ENCODE measurements at regions of chr7 and their contacts with region 1.

Region 1: DNA sequence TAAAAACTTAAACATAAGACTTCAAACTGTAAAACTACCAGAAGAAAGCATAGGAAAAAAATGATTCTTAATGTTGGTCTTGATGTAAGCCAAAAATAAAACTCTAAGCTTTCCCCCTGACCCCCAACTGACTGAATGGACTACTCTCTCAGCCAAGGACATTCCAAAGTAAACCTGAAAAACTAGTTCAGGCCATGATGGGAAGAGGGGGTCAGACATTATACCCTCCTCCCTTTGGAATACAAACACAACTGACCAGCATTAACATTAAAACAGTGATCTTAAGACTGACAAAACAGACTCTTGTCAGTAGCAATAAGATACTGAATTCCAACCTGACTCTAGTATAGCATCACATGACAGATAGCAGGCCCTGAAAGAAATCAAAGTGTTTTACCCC is 13.5 kb upstream of the LRGUK start:
- DNase-seq: no peak
- H3K4me3 ChIP-seq: no peak overlapping the region
- H3K27ac ChIP-seq: no peak overlapping the region
- H3K4me1 ChIP-seq: no peaks in the 10 kb centered on the region
- H3K27me3 ChIP-seq: no peaks in the 10 kb centered on the region
- CTCF ChIP-seq: no peak
- POLR2A ChIP-seq: no peak

Region 2: DNA sequence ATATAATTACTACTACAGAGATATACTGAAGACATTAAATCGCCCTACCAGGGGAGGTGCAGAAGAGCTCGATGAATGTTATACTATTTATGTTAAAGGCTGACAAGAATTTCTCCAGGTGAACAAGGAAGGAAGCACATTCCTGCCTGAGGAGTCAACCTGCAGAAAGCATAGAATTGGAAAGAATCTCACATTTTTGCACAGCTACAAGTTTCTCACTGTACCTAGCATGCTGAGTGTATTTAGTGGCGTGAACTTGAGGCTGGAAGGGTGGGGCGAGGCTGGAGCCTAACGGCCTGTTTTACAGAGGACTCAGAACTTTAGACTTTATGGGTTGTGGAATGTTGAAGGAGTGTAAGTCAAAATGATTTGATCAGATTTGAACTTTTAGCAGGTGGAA is 360.1 kb before region 1 on chr7:
- intact Hi-C with region 1: no loop called
- DNase-seq: no peak
- H3K4me3 ChIP-seq: no peak overlapping the region
- H3K27ac ChIP-seq: no peak overlapping the region
- H3K4me1 ChIP-seq: no peaks in the 10 kb centered on the region
- H3K27me3 ChIP-seq: no peaks in the 10 kb centered on the region
- CTCF ChIP-seq: no peak
- POLR2A ChIP-seq: no peak

Region 3: DNA sequence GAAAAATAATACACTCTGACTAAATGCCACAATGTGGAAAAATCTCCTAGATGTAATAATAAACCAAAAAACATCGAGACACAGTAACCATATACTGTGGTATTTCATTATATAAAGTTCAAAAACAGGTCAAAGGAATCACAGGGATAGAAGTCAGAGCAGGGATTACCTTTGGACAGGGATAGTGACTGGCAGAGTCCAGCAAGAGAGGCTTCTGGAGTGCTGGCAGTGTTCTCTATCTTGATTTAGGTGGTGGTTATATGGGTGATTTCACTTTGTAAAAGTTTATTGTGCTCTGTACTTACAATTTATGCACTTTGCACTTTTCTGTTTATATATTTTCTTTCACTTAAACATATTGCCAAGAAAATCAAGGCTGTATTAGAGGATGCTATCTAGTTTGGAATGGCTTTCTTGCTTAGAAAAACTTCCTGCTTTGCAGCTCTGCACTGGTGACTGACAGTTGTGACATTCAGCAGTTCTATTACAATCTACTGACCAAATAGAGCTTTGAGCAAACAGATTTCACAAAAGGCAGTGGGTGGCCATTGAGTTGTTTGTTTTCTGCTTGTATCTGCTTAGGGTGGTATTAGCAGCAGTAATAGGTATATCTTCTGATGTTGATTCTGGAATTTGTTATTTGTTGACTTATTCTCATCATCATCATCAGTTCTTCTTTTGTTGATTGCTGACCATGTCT is 250.1 kb before region 1 on chr7:
- intact Hi-C with region 1: no loop called
- DNase-seq: no peak
- H3K4me3 ChIP-seq: no peak overlapping the region
- H3K27ac ChIP-seq: no peak overlapping the region
- H3K4me1 ChIP-seq: peaks cover 0 to 9% (median 0%) of the 10 kb centered on the region in 6 donors
- H3K27me3 ChIP-seq: no peaks in the 10 kb centered on the region
- CTCF ChIP-seq: no peak
- POLR2A ChIP-seq: no peak

Region 4: DNA sequence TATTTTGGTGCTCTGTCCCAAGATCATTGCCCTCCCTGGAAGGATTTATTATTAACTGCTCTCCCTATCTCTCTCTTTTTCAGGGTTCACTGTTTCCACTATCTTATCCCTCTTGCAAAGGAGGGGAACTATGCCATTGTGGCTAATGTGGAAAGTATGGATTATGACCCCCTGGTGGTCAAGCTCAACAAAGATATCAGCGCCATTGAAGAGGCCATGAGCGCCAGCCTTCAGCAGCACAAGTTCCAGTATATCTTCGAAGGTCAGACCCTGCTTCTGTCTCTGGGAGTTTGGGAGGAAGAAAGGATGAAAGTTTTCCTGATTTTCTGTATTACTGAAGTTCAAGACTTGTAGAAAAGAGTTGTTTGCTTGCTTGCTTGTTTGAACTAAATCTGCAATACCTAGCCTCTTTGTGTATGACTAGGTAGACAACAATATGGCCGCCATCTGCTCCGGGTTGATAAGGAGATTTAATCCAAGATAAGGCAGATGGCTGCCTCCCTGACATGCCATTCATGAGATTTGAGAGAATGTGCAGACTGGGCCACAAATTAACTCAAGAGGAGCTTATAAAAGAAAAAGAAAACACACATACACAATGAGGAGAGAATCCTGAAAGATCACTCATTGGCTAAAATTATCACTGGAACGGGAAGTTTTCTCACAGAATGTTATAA is 108.7 kb before region 1 on chr7:
- intact Hi-C with region 1: no loop called
- DNase-seq: no peak
- H3K4me3 ChIP-seq: no peak overlapping the region
- H3K27ac ChIP-seq: no peak overlapping the region
- H3K4me1 ChIP-seq: no peaks in the 10 kb centered on the region
- H3K27me3 ChIP-seq: no peaks in the 10 kb centered on the region
- CTCF ChIP-seq: no peak
- POLR2A ChIP-seq: no peak

Region 5: GRCh38 chr7:134098072-134098471 is 15.6 kb before region 1 on chr7:
- intact Hi-C with region 1: loop called (anchors 2 kb)
- DNase-seq: no peak
- H3K4me3 ChIP-seq: no peak overlapping the region
- H3K27ac ChIP-seq: no peak overlapping the region
- H3K4me1 ChIP-seq: no peaks in the 10 kb centered on the region
- H3K27me3 ChIP-seq: no peaks in the 10 kb centered on the region
- CTCF ChIP-seq: no peak
- POLR2A ChIP-seq: no peak

Region 6: GRCh38 chr7:134197345-134197744 is 83.7 kb after region 1 on chr7:
- intact Hi-C with region 1: no loop called
- DNase-seq: no peak
- H3K4me3 ChIP-seq: no peak overlapping the region
- H3K27ac ChIP-seq: no peak overlapping the region
- H3K4me1 ChIP-seq: no peaks in the 10 kb centered on the region
- H3K27me3 ChIP-seq: no peaks in the 10 kb centered on the region
- CTCF ChIP-seq: no peak
- POLR2A ChIP-seq: no peak

Measured in spleen (tissue), 13 donors.